Heart right ventricle (tissue), 16 donors: ENCODE measurements at regions of chr20 and their contacts with region 1.

Region 1: GRCh38 chr20:46562373-46563169 is 12.1 kb upstream of the OCSTAMP start:
- DNase-seq: peak; percentile 33 to 74
- ATAC-seq: peak; percentile 75 to 92 (median 86)
- H3K4me3 ChIP-seq: peak overlapping the region in 9 of 10 donors; percentile 25 to 50 (median 44)
- H3K27ac ChIP-seq: peak overlapping the region in 9 of 10 donors; percentile 30 to 83 (median 55)
- H3K4me1 ChIP-seq: peaks cover 0 to 20% (median 14%) of the 10 kb centered on the region in 9 donors
- H3K27me3 ChIP-seq: no peaks in the 10 kb centered on the region
- CTCF ChIP-seq: peak; percentile 79 to 96 (median 94)

Region 2: DNA sequence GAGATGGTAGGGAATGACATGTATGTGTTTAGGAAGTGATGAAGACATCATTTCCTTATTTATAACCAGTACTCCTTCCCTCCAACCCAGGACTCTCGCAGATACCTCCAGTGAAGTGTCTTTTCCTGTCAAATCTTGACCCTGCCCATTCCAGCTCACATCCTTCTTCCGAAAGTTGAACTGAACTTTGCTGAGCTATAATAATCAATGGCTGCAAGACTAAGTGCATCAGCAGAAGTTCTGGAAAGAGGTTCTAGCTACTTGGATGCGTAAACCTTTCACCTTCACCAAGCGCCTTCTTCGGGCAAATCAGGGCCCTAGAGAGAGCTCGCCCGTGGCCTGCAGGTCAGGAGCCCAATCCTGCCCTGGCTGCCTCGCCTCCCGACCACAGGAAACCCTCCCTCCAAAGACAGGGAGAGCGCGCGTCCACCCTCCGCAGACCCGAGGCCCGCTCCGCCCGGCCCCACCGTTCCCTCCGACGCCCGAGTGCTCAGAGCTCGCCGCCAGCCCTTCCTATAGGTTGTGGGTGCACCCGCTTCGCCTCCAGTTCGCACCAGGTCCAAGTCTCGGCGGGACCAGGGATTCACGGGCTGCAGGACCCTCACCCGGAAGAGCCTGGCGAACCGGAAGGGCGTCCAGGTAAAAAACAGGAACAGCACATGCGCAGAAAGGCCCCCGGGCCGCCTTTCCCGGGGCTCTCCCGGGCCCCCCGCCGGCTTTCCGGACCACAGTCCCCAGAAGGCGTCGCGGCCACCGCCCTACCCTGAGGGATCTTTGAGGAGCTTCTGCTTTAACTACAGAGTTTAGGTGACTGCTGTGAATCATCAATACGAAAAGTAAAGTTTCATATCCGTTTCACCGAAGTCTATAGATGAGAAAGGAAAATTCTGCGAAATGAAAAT is 49.4 kb before region 1 on chr20 and contains the start of gene ZNF334:
- intact Hi-C with region 1: loop called in 1 of 10 experiments (anchors 1 kb)
- DNase-seq: peak; percentile 60 to 77
- ATAC-seq: peak; percentile 93 to 99 (median 97)
- H3K4me3 ChIP-seq: peak within 1 kb of the TSS; percentile 60 to 92 (median 74)
- H3K27ac ChIP-seq: peak within 1 kb of the TSS in 9 of 10 donors; percentile 8 to 91 (median 70)
- H3K4me1 ChIP-seq: peaks cover 0 to 13% (median 9%) of the 10 kb centered on the region in 9 donors
- H3K27me3 ChIP-seq: peaks cover 0 to 32% (median 15%) of the 10 kb centered on the region in 7 donors
- CTCF ChIP-seq: peak in 1 of 9 donors; percentile 11
- total RNA-seq, gene ZNF334: 0.70 to 3.0 (median 1.6) TPM

Region 3: DNA sequence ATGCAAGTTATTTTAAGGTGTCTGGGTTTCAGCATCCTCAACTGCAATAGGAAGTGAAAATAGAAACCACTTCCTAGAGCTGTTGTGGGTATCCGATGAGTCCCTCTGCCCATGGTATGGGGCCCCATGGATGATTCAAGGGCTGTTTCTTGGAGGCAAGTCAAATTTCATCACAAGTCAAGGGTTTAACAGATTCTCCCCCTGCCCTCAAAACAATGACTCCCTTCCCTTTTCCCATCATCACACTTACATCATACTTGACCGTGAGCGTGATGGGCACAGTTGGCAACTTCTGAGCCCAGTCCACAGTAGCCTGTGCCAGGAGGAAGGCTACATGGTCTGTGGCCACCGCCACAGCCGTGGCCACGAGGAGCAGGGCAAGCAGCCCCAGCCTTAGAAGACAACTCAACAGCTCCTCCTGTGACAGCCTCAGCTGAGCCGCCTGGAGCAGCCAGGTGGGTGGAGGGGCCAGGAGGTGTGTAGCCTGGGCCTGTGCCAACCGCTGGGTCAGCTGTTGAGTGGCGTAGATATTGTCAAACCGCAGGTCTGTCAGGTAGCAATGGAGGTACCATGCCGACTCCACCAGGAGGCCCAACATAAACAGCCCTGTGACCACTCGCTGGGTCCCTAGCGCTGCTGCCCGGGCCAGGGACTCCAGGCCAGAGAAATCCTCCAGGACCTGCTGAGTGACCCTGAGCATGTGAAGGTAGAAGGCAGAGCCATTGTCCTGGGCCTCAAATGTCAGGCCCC is 17.3 kb before region 1 on chr20:
- intact Hi-C with region 1: no loop called
- DNase-seq: no peak
- ATAC-seq: no peak
- H3K4me3 ChIP-seq: no peak overlapping the region
- H3K27ac ChIP-seq: no peak overlapping the region
- H3K4me1 ChIP-seq: peaks cover 0 to 14% (median 0%) of the 10 kb centered on the region in 9 donors
- H3K27me3 ChIP-seq: peaks cover 0 to 50% (median 37%) of the 10 kb centered on the region in 7 donors
- CTCF ChIP-seq: no peak

Region 4: DNA sequence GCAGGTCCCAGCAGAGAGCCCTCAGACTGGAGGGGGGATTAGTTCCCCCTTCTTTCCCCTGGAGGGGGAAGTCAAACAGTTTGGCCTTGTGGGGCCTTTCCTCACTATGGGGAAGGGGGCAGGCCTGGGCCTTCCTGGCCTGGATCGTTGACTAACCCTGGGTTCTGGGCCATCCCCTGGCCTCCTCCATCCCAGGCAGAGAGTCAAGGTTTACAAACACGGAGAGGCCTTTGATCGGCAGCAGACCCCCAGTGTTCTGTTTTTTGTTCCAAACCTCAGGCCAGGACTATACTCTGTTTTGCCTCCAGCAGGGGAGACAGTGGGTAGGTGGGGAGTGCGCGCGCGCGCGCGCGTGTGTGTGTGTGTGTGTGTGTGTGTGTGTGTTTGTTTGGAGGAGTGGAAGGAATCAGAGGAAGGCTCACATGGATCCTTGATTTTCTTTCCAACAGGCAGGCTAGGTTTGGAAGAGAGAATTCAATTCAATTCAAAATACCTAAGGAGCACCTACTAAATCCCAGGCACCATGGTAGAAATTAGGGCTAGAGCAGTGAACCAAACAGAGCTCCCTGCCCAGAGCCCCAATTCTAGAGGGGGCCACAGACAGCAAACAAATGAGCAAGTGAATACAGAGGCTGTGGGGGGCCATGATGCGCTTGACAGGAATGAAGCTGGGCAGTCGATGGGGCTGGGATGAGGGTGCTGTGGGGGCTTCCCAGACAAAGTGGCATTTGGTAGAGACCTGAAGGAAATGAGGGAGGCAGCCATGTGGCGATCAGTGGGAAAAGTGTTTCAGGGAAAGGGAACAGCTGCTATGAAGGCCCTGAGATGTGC is 111.9 kb after region 1 on chr20:
- intact Hi-C with region 1: loop called in 1 of 10 experiments (anchors 10 kb)
- DNase-seq: no peak
- ATAC-seq: peak in 1 of 8 donors; percentile 44
- H3K4me3 ChIP-seq: no peak overlapping the region
- H3K27ac ChIP-seq: no peak overlapping the region
- H3K4me1 ChIP-seq: no peaks in the 10 kb centered on the region
- H3K27me3 ChIP-seq: no peaks in the 10 kb centered on the region
- CTCF ChIP-seq: no peak

Region 5: GRCh38 chr20:46857061-46857831 is 294.7 kb after region 1 on chr20:
- intact Hi-C with region 1: no loop called
- DNase-seq: no peak
- ATAC-seq: no peak
- H3K4me3 ChIP-seq: no peak overlapping the region
- H3K27ac ChIP-seq: no peak overlapping the region
- H3K4me1 ChIP-seq: no peaks in the 10 kb centered on the region
- H3K27me3 ChIP-seq: peaks cover 0 to 8% (median 0%) of the 10 kb centered on the region in 7 donors
- CTCF ChIP-seq: no peak